ENCODE measurements at regions of chr13 and their contacts with region 1.

Region 1: GRCh38 chr13:78595495-78596398 is 7.6 kb downstream of the POU4F1 start:
- DNase-seq: peak; percentile 69
- H3K4me3 Mint-ChIP-seq: no peak overlapping the region
- H3K27ac Mint-ChIP-seq: peak overlapping the region; percentile 40
- H3K4me1 Mint-ChIP-seq: peaks cover 3% of the 10 kb centered on the region
- H3K27me3 Mint-ChIP-seq: peaks cover 80% of the 10 kb centered on the region

Region 2: GRCh38 chr13:77506874-77507273 is 1088.9 kb before region 1 on chr13:
- intact Hi-C with region 1: no loop called
- DNase-seq: no peak
- H3K4me3 Mint-ChIP-seq: no peak overlapping the region
- H3K27ac Mint-ChIP-seq: no peak overlapping the region
- H3K4me1 Mint-ChIP-seq: peaks cover 12% of the 10 kb centered on the region
- H3K27me3 Mint-ChIP-seq: peaks cover 3% of the 10 kb centered on the region

Region 3: DNA sequence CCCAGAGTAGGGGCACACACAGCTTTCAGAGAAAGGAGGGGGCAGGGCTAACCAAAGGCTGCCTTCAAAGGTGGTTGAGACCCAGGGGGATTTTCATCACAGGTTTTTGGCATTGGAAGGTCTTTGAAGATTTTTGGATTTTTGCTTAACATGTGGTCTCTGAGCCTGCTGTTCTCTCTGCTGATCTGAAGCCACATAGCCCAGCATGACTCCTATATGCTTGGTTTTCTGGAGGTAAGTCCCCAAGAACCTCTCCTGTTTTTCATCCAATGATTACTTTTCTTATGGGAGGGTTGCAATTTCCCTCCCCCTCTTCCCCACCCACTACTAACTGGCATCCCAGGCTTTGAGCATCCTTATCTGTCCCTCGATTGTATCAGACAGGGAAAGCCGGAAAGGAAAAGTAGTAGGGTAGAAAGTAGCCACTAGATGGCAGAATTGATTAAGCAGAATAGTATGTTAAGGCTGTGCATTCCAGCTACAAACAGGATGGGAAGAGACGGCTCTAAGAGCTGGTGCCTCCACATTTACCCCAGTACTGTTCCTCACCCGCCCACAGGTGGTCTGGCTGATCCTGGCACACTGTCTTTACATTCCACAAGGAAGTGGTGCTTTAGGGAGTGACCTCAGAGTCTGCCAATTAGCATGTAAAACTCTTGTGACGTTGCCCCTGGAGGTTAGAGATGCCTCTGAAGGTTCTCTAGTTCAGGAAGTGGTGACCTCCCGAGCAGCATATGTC is 458.2 kb before region 1 on chr13:
- intact Hi-C with region 1: loop called (anchors 10 kb)
- DNase-seq: peak; percentile 66
- H3K4me3 Mint-ChIP-seq: peak overlapping the region; percentile 45
- H3K27ac Mint-ChIP-seq: no peak overlapping the region
- H3K4me1 Mint-ChIP-seq: peaks cover 5% of the 10 kb centered on the region
- H3K27me3 Mint-ChIP-seq: peaks cover 3% of the 10 kb centered on the region

Region 4: DNA sequence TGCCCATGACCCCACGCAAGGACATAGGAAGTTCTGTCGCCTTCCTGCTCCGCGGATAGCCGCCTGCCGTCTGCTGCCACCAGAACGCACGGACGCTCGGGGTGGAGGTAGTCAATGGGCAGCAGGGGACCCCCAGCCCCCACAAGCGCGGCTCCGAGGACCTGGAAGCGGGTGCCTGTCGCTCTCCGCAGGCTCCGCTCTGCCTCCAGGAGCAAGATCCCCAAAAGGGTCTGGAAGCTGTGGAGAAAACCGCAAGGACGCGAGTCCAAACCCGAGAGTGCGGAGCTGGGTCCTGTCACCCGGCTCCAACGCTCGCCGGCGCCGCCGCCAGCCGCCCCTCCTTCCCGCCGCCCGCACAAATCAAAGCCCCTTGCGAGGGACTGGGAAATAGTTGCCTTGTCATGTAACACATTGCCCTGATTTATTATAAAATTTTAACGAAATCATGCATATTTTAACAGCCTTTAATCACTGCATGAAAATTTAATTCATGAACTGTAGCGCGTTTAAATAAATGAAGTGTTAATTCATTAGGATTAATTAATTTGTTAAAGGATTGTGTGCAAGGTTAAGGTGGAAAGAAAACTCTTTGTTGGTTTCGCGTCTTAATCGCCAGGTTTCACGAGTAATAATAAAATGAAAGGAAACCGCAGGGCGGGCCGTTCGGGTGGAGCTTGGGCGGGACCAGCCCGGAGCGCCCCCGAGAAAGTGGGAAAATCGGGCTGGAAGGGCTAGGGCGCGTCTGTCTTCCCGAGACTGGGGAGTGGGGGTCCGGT is 13.1 kb after region 1 on chr13:
- intact Hi-C with region 1: loop called (anchors 1 kb)
- DNase-seq: peak; percentile 64
- H3K4me3 Mint-ChIP-seq: peak overlapping the region; percentile 76
- H3K27ac Mint-ChIP-seq: peak overlapping the region; percentile 45
- H3K4me1 Mint-ChIP-seq: peaks cover 17% of the 10 kb centered on the region
- H3K27me3 Mint-ChIP-seq: peaks cover 76% of the 10 kb centered on the region

Region 5: GRCh38 chr13:80342471-80343380 is 1747.0 kb after region 1 on chr13:
- intact Hi-C with region 1: loop called (anchors 2 kb)
- DNase-seq: peak; percentile 91
- H3K4me3 Mint-ChIP-seq: peak overlapping the region; percentile 72
- H3K27ac Mint-ChIP-seq: no peak overlapping the region
- H3K4me1 Mint-ChIP-seq: peaks cover 8% of the 10 kb centered on the region
- H3K27me3 Mint-ChIP-seq: peaks cover 39% of the 10 kb centered on the region

Measured in activated CD4-positive, alpha-beta T cell treated with anti-CD3 and anti-CD28 coated beads, Interleukin-2, amount 10 ng/mL, durations not matched to agents 24 days and 14 days (primary cell).